ENCODE measurements at regions of chr16 and their contacts with region 1.

Region 1: DNA sequence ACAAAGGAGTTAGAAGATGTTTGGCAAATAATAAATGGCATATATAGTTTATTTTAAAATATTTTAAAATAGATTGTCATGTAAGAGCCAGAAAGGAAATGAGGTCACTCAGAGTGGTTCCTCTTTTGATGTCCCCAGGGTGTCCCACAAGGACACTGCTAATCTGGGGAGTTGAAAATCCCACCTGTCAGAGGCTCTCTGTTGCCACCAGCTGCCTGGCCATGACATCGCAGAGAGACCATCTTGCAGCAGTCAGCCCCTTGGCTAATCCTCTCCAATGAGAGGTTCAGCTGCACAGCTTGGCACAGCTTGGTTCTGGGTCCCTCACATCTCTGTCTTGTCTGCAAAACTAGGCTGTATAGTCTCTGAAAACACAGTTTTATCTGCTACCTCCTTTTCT is 11.0 kb upstream of the RBFOX1 start:
- DNase-seq: no peak
- H3K4me3 ChIP-seq: no peak overlapping the region
- H3K27ac ChIP-seq: no peak overlapping the region
- H3K4me1 ChIP-seq: no peaks in the 10 kb centered on the region
- H3K27me3 ChIP-seq: no peaks in the 10 kb centered on the region
- CTCF ChIP-seq: no peak
- EP300 ChIP-seq: no peak
- POLR2A ChIP-seq: no peak

Region 2: GRCh38 chr16:6229186-6229585 is 1092.5 kb before region 1 on chr16:
- intact Hi-C with region 1: loop called in 1 of 4 experiments (anchors 5 kb)
- DNase-seq: no peak
- H3K4me3 ChIP-seq: no peak overlapping the region
- H3K27ac ChIP-seq: no peak overlapping the region
- H3K4me1 ChIP-seq: no peaks in the 10 kb centered on the region
- H3K27me3 ChIP-seq: no peaks in the 10 kb centered on the region
- CTCF ChIP-seq: no peak
- EP300 ChIP-seq: no peak
- POLR2A ChIP-seq: no peak

Measured in ovary (tissue), 10 donors.